ENCODE measurements at regions of chr2 and their contacts with region 1.

Region 1: GRCh38 chr2:10285556-10286198 is 17.0 kb upstream of the HPCAL1 start:
- DNase-seq: peak in 9 of 10 donors; percentile 79 to 93 (median 88)
- H3K4me3 ChIP-seq: peak overlapping the region in 3 of 59 donors; percentile 5 to 16 (median 15)
- H3K27ac ChIP-seq: peak overlapping the region; percentile 34 to 96 (median 86)
- H3K27me3 ChIP-seq: no peaks in the 10 kb centered on the region
- CTCF ChIP-seq: peak in 41 of 56 donors; percentile 10 to 63 (median 30)

Region 2: DNA sequence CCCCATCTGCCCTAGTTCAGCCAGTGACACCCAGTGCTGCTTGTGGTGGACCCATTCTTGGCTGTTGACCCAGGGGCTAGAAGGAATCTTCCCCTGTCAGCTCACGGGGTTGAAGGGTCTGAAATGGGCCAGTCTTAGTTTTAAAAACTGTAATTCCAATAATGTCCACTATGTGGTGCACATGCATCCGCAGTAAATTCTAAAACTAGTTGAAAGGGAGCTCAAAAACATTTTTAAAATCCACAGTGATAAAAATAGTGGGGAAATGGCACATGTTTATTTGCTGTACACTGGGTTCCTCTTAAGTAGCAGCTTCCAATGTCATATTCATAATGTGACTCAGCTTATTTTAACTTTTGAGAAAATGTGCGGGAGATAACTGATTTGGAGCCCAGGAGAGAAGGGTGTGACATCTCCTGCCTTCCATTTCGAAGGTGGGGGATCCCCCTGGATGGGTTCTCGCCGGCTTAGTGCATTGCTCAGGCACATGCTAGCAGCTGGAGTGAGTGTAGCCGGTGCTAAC is 301.4 kb before region 1 on chr2:
- intact Hi-C with region 1: no loop called
- DNase-seq: no peak
- H3K4me3 ChIP-seq: no peak overlapping the region
- H3K27ac ChIP-seq: peak overlapping the region in 1 of 59 donors; percentile 54
- H3K27me3 ChIP-seq: no peaks in the 10 kb centered on the region
- CTCF ChIP-seq: peak; percentile 63 to 94 (median 86)

Region 3: GRCh38 chr2:10316336-10316735 is 30.7 kb after region 1 on chr2:
- intact Hi-C with region 1: no loop called
- DNase-seq: no peak
- H3K4me3 ChIP-seq: no peak overlapping the region
- H3K27ac ChIP-seq: peak overlapping the region in 4 of 59 donors; percentile 0 to 52 (median 32)
- H3K27me3 ChIP-seq: no peaks in the 10 kb centered on the region
- CTCF ChIP-seq: no peak

Region 4: DNA sequence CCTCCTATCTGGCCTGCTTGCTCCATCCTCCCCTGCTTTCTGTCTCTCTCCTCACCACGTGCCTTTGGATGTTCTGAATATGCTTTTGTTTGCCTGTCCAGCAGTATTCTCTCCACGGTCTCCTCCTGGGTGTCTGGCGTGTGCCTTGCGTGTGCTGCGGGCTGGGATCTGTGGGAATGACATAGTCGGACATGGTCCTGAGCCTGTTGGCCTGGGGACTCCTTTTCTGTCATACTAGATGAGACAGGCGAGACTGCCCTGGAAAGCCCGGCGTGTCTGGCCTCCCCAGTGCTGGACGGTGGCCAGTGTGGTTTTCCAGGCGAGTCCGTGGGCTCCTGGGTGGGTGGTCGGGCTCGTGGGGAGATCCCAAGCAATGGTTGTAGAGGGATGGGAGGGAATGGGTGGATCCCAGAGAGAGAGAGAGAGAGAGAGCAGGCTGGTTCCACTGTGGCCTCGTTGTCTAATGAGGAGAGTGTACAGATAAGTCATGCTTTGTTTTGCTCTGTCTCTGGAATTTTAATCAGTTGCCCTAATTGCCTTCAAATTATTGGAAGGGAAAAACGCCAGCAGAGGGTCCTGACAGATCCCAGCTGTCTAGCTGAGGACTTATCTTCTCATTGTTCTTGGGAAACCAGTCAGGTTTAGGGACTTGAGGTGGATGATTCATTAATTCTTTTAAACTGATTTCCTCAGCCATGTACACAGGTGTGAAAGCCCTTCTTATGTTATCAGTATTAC is 75.3 kb after region 1 on chr2:
- intact Hi-C with region 1: loop called in 1 of 2 experiments (anchors 5 kb)
- DNase-seq: no peak
- H3K4me3 ChIP-seq: peak overlapping the region in 15 of 59 donors; percentile 1 to 48 (median 19)
- H3K27ac ChIP-seq: peak overlapping the region in 36 of 59 donors; percentile 11 to 80 (median 54)
- H3K27me3 ChIP-seq: no peaks in the 10 kb centered on the region
- CTCF ChIP-seq: no peak

Measured in dorsolateral prefrontal cortex (tissue), 120 donors.